K562 (cell line): ENCODE measurements at regions of chr22 and their contacts with region 1.

Region 1: DNA sequence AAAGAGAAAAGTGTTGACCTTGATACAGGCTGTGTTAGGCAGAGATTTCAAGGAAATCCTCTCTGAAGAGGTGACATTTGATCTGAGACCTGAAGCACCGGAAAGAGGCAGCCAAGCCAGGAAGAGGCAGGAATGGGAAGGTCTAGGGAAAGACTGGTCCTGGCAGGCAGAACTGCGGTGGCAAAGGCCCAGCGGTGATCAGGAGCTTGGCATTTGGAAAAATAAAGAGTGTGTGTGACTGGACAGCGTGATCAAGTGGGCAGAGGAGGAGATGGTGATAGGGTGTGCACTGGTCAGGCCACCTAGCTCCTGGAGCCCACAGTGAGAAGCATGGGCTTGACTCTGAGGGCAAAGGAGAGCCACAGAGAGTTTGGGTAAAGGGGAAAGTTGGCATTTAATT is 27.2 kb upstream of the GAB4 start:
- DNase-seq: no peak
- ATAC-seq: no peak
- H3K4me3 ChIP-seq: no peak overlapping the region
- H3K27ac ChIP-seq: no peak overlapping the region
- H3K4me1 ChIP-seq: peaks cover 2 to 16% of the 10 kb centered on the region in 2 experiments; a peak in 2 of 5 replicates
- H3K27me3 ChIP-seq: no peaks in the 10 kb centered on the region
- CTCF ChIP-seq: no peak
- EP300 ChIP-seq: no peak
- POLR2A ChIP-seq: no peak
- RAD21 ChIP-seq: no peak

Region 2: GRCh38 chr22:17047656-17048055 is 12.4 kb after region 1 on chr22:
- CTCF ChIA-PET with region 1: no interaction called
- POLR2A ChIA-PET with region 1: interaction called, 13 read pairs
- in situ Hi-C with region 1: no loop called
- intact Hi-C with region 1: no loop called
- DNase-seq: no peak
- ATAC-seq: no peak
- H3K4me3 ChIP-seq: no peak overlapping the region
- H3K27ac ChIP-seq: no peak overlapping the region
- H3K4me1 ChIP-seq: no peaks in the 10 kb centered on the region
- H3K27me3 ChIP-seq: no peaks in the 10 kb centered on the region
- CTCF ChIP-seq: no peak
- EP300 ChIP-seq: no peak
- POLR2A ChIP-seq: no peak
- RAD21 ChIP-seq: no peak